Head of caudate nucleus (tissue), 42 donors: ENCODE measurements at regions of chr2 and their contacts with region 1.

Region 1: GRCh38 chr2:53970724-53971602 is at the start of gene PSME4:
- DNase-seq: peak; percentile 84 to 98 (median 96)

Region 2: GRCh38 chr2:53670331-53670730 is 300.6 kb before region 1 on chr2:
- intact Hi-C with region 1: no loop called
- DNase-seq: no peak

Region 3: DNA sequence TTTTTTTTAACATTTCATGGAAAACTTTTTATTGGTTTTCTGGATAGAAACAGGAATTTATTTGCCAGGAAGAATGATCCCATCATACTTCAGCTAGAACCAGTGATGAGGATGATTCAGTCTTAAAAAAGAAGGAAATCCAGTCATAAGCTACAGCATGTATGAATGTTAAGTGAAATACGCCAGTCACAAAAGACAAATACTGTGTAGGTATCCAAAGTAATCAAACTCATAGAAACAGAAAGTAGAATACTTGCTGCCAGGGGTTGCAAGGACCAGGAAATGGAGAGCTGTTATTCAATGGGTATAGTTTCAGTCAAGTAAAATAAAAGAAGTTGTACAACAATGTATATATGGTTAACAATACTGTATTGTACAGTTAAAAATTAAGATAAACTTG is 21.5 kb before region 1 on chr2:
- intact Hi-C with region 1: no loop called
- DNase-seq: no peak

Region 4: GRCh38 chr2:54029721-54030395 is 58.9 kb after region 1 on chr2:
- intact Hi-C with region 1: loop called (anchors 10 kb)
- DNase-seq: no peak

Region 5: DNA sequence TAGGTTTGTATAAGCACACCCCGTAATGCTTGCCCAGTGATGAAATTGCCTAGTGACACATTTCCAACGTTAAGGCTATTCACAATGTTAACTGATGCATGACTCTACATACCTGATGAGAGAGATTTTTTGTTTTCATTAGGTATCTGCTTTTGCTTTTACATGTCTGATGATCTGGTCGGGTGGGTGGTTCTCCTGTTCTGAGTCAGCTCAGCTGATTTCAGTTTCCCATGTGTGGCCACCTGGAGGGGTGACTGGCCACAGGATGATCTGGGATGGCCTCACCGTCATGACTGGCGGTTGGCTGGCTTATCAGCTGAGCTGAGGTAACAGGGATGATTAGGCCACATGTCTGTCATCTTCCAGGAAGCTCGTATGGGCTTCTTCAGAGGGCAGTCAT is 110.6 kb after region 1 on chr2:
- intact Hi-C with region 1: loop called (anchors 10 kb)
- DNase-seq: no peak